ENCODE measurements at regions of chr19 and their contacts with region 1.

Region 1: GRCh38 chr19:48271531-48272151 is 1.8 kb downstream of the ZNF114 start:
- DNase-seq: peak; percentile 50
- H3K4me3 Mint-ChIP-seq: peak overlapping the region; percentile 70
- H3K27ac Mint-ChIP-seq: no peak overlapping the region
- H3K4me1 Mint-ChIP-seq: peaks cover 5% of the 10 kb centered on the region
- H3K27me3 Mint-ChIP-seq: peaks cover 9% of the 10 kb centered on the region
- CTCF ChIP-seq: no peak

Region 2: GRCh38 chr19:48158210-48158790 is 113.3 kb before region 1 on chr19:
- CTCF ChIA-PET with region 1: no interaction called
- POLR2A ChIA-PET with region 1: no interaction called
- intact Hi-C with region 1: no loop called
- DNase-seq: no peak
- H3K4me3 Mint-ChIP-seq: no peak overlapping the region
- H3K27ac Mint-ChIP-seq: no peak overlapping the region
- H3K4me1 Mint-ChIP-seq: no peaks in the 10 kb centered on the region
- H3K27me3 Mint-ChIP-seq: no peaks in the 10 kb centered on the region
- CTCF ChIP-seq: no peak

Region 3: GRCh38 chr19:48290771-48291488 is 19.3 kb after region 1 on chr19:
- CTCF ChIA-PET with region 1: interaction called, 65 read pairs
- POLR2A ChIA-PET with region 1: interaction called, 10 read pairs
- intact Hi-C with region 1: loop called (anchors 1 kb)
- DNase-seq: peak; percentile 79
- H3K4me3 Mint-ChIP-seq: peak overlapping the region; percentile 63
- H3K27ac Mint-ChIP-seq: no peak overlapping the region
- H3K4me1 Mint-ChIP-seq: no peaks in the 10 kb centered on the region
- H3K27me3 Mint-ChIP-seq: peaks cover under 1% of the 10 kb centered on the region
- CTCF ChIP-seq: peak; percentile 95